HCT116 (cell line): ENCODE measurements at regions of chr5 and their contacts with region 1.

Region 1: GRCh38 chr5:172764849-172765765 is 5.9 kb downstream of the DUSP1 start:
- DNase-seq: peak; percentile 98
- ATAC-seq: peak; percentile 83
- H3K4me3 ChIP-seq: peak overlapping the region; percentile 60
- H3K27ac ChIP-seq: peak overlapping the region; percentile 77
- H3K4me1 ChIP-seq: peaks cover 23 to 40% of the 10 kb centered on the region in 2 experiments
- H3K27me3 ChIP-seq: no peaks in the 10 kb centered on the region
- CTCF ChIP-seq: no peak
- POLR2A ChIP-seq: peak; percentile 30
- RAD21 ChIP-seq: no peak

Region 2: GRCh38 chr5:171606414-171607024 is 1158.6 kb before region 1 on chr5:
- CTCF ChIA-PET with region 1: no interaction called
- POLR2A ChIA-PET with region 1: no interaction called
- RAD21 ChIA-PET with region 1: no interaction called
- intact Hi-C with region 1: no loop called
- DNase-seq: peak; percentile 67
- ATAC-seq: peak; percentile 90
- H3K4me3 ChIP-seq: no peak overlapping the region
- H3K27ac ChIP-seq: no peak overlapping the region
- H3K4me1 ChIP-seq: no peaks in the 10 kb centered on the region
- H3K27me3 ChIP-seq: no peaks in the 10 kb centered on the region
- CTCF ChIP-seq: peak; percentile 80 to 86 (median 84)
- POLR2A ChIP-seq: no peak
- RAD21 ChIP-seq: peak; percentile 82

Region 3: GRCh38 chr5:172777881-172778814 is 13.0 kb after region 1 on chr5:
- CTCF ChIA-PET with region 1: interaction called, 3 read pairs
- POLR2A ChIA-PET with region 1: interaction called, 18 read pairs
- RAD21 ChIA-PET with region 1: no interaction called
- intact Hi-C with region 1: no loop called
- DNase-seq: peak; percentile 90
- ATAC-seq: peak; percentile 84
- H3K4me3 ChIP-seq: peak overlapping the region; percentile 16 to 47
- H3K27ac ChIP-seq: peak overlapping the region; percentile 68
- H3K4me1 ChIP-seq: peaks cover 30 to 46% of the 10 kb centered on the region in 2 experiments
- H3K27me3 ChIP-seq: no peaks in the 10 kb centered on the region
- CTCF ChIP-seq: no peak
- POLR2A ChIP-seq: no peak
- RAD21 ChIP-seq: no peak

Region 4: DNA sequence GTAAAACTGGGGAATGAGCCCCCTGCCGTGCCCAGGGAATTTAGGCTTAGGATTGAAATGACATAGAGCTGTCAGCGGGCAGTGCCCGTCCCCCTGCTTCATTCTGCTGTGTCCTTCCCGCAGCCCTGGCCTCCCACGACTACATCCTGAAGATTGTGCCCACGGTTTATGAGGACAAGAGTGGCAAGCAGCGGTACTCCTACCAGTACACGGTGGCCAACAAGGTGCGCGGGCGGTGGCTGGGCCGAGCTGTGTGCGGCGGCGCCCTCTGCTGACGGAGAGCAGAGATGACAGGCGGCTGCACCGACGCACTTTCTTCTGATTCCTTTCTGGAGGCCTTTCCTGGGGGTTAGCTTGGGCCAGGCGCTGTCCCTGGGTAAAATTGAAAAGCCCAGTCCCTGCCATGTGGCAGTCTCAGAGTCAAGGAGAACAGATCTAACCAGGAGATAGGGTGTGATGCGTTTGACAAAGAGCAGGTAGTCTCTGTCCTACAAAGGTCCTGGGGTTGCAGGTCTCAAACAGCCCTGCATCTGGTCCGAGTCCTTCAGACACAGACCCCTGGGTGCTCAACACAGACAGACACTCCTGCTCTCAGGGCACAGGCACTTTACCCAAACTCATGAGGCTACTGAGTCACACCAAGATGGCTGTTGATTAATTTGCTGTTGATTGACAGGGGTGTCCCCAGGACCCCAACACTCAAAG is 167.4 kb after region 1 on chr5:
- CTCF ChIA-PET with region 1: no interaction called
- POLR2A ChIA-PET with region 1: no interaction called
- RAD21 ChIA-PET with region 1: no interaction called
- intact Hi-C with region 1: loop called (anchors 5 kb)
- DNase-seq: peak; percentile 10
- ATAC-seq: peak; percentile 96
- H3K4me3 ChIP-seq: no peak overlapping the region
- H3K27ac ChIP-seq: no peak overlapping the region
- H3K4me1 ChIP-seq: no peaks in the 10 kb centered on the region; a peak in 1 of 4 replicates
- H3K27me3 ChIP-seq: no peaks in the 10 kb centered on the region
- CTCF ChIP-seq: peak; percentile 87 to 91 (median 90)
- POLR2A ChIP-seq: no peak
- RAD21 ChIP-seq: peak; percentile 97